Psoas muscle (tissue), 8 donors: ENCODE measurements at regions of chrX and their contacts with region 1.

Region 1: GRCh38 chrX:44568196-44568595 is 25.5 kb upstream of the FUNDC1 start:
- DNase-seq: no peak
- ATAC-seq: no peak
- H3K4me3 ChIP-seq: no peak overlapping the region
- H3K27ac ChIP-seq: no peak overlapping the region
- H3K4me1 ChIP-seq: no peaks in the 10 kb centered on the region
- H3K27me3 ChIP-seq: no peaks in the 10 kb centered on the region
- CTCF ChIP-seq: no peak

Region 2: DNA sequence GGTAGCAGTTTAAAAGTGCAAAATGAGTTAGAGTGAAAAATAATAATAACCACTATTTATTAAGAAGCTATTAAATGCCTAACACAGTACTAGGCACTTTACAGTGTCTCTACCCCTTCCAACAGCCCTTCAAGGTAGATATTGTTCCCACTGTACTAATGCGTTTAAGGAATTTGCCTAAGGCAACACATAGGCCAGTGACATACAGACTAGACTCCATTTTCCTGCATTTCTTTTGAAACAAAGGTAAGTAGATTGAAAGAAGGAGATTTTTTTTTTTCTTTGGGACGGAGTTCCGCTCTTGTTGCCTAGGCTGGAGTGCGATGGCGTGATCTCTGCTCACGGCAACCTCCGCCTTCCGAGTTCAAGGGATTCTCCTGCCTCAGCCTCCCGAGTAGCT is 280.0 kb after region 1 on chrX:
- intact Hi-C with region 1: loop called in 1 of 2 experiments (anchors 5 kb)
- DNase-seq: no peak
- ATAC-seq: no peak
- H3K4me3 ChIP-seq: no peak overlapping the region
- H3K27ac ChIP-seq: no peak overlapping the region
- H3K4me1 ChIP-seq: no peaks in the 10 kb centered on the region
- H3K27me3 ChIP-seq: no peaks in the 10 kb centered on the region
- CTCF ChIP-seq: no peak